ENCODE measurements at regions of chr10 and their contacts with region 1.

Region 1: DNA sequence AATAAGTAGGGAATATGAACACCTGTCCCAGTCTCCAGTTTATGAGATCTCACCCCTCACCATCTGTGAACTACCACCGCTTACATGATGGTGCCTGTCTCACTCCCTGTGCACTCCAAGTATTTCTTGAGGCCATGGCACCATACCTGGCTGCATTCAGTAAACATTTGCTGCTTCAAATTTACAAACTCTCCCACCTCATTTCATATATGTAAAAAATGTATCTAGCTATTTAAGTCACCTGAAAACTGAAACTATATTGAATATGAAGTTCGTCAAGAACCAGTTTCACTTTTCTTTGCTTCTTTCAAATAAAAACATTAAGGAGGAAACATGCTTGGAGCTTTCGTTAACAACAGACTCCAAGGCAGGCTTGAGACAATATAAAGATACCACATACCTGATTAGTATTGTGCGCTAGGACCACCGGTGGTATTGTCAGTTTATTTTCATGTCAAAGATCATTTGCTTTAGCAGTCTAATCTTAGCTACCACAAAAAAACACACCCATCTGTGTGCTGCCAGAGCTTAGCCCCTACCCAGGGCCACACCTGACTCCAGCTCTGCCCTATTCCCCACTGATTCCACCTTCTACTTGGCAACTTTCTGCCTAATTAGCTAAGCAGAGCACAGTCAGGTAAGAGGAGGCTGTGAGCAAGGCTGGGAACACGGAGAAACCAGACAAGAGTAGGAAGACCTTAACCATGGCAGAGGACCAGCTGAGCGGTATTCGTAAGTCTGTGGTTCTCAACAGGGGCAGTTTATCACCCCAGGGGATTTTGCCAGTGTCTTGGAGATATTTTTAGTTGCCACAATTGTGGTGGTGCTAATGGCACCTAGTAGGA is 92.0 kb downstream of the ZFAND4 start:
- DNase-seq: no peak
- ATAC-seq: peak; percentile 66 to 83 (median 78)
- H3K4me3 ChIP-seq: peak overlapping the region in 2 of 4 donors; percentile 25 to 30
- H3K27ac ChIP-seq: peak overlapping the region in 3 of 4 donors; percentile 24 to 78 (median 72)
- H3K4me1 ChIP-seq: peaks cover 16 to 26% (median 17%) of the 10 kb centered on the region in 3 donors
- H3K27me3 ChIP-seq: no peaks in the 10 kb centered on the region
- CTCF ChIP-seq: no peak

Region 2: DNA sequence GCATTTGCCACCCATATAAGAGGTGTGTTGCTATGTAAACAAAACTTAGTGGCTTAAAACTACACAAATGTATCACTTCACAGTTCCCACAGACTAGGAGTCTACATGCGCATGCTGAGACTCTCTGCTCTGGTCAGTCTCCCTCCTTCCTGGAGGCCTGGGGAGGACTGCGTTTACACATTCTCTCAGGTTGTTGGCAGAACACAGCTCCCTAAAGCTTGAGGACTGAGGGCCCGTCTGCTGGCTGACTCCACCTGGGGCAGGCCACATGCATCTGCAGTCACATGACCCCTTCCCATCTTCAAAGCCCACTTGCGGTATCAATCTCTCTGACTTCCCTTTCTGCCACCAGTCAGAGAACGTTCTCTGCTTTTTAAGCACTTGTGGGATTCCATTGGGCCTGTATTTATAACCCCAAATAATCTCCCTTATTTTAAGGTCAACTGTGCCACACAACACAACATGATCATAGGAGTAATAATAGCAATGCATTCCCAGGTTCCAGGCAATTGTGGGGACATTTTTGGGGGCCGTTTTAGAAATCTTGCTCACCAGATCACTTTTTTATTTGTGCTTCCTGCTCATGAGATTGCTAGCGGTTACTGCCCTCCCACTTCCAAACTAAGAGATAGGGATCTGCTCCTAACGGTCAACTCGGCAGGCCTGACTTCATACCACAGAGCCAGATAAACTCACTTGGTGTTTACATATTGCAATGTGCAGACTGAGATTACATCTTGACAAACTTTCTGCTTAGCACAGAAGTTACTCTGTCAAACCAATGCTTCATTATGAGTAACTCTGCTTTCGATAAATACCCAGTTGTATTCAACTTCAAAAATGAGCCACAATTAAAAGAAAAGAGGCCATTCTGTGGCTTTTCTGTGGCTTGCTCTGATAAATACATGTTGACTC is 110.2 kb before region 1 on chr10:
- intact Hi-C with region 1: loop called in 1 of 3 experiments (anchors 10 kb)
- DNase-seq: no peak
- ATAC-seq: peak; percentile 41 to 70 (median 58)
- H3K4me3 ChIP-seq: no peak overlapping the region
- H3K27ac ChIP-seq: peak overlapping the region in 3 of 4 donors; percentile 2 to 53 (median 12)
- H3K4me1 ChIP-seq: peaks cover 3 to 21% (median 14%) of the 10 kb centered on the region in 3 donors
- H3K27me3 ChIP-seq: no peaks in the 10 kb centered on the region
- CTCF ChIP-seq: no peak

Region 3: DNA sequence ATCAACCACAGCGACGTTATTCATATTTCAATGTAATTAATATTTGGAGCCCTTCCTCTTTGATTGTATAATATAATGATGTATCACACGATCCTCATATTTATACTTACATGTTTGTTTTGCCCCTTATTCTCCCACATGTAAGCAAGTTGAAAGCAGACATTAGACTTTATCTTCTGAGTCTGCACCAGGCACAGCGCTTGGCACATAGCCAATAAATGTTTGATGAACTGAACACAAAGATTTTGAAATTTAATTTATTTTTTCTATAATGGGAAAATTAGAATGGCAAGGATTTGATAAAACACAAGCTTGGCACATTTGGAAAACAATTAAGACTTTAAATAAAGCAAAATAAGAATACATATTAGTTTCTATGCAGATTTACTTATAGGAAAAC is 60.3 kb after region 1 on chr10:
- intact Hi-C with region 1: no loop called
- DNase-seq: no peak
- ATAC-seq: no peak
- H3K4me3 ChIP-seq: no peak overlapping the region
- H3K27ac ChIP-seq: no peak overlapping the region
- H3K4me1 ChIP-seq: no peaks in the 10 kb centered on the region
- H3K27me3 ChIP-seq: no peaks in the 10 kb centered on the region
- CTCF ChIP-seq: no peak